Activated CD4-positive, alpha-beta memory T cell treated with anti-CD3 and anti-CD28 coated beads for 36 hours (primary cell): ENCODE measurements at regions of chr1 and their contacts with region 1.

Region 1: DNA sequence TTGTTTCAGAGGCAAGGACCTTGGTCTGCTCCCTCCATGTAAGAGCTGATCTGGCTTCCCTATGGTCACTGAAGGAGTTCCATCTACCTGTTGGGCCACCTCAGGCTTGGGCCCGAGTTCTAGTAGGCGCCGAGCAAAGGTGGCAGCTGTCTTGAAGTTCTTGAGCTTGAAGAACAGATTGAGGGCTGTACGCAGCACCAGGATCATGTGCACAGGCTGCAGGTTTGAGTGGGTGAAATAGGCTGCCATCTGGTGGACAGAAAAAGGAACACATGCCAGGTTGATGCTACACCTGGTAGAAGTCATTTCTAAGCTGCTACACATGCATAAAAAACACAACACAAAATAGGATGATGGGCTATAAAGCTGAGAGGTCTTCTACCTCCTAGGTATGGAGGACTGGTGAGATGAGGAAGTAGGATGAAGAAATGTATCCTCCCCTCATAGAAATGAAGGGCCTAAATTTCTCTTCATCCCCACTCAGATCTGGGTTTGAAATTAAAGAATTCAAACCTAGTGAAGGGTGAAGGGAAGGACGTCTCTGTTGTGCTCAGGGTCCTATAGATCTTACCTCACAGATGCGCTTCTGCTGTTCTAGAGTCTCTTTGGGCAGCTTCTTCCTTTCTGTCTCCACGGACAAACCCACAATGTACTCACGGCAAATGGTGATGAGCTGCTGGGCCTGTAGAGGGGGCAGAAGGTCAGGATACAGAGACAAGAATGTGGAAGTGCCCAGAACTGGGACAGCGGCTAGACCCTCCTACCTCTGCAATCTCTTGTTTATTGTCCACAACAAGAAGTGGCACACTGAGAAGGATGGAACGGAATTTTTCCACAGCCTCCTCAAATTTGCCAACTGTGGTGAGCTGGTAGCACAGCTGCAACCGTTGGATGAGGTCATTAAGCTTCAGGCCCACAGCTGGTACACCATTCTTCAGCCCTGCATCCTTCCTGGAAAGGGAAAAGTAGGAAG is 6.6 kb upstream of the PEX19 start:
- DNase-seq: peak; percentile 76
- H3K4me3 Mint-ChIP-seq: no peak overlapping the region
- H3K27ac Mint-ChIP-seq: peak overlapping the region; percentile 47
- H3K4me1 Mint-ChIP-seq: peaks cover 3% of the 10 kb centered on the region
- H3K27me3 Mint-ChIP-seq: no peaks in the 10 kb centered on the region

Region 2: DNA sequence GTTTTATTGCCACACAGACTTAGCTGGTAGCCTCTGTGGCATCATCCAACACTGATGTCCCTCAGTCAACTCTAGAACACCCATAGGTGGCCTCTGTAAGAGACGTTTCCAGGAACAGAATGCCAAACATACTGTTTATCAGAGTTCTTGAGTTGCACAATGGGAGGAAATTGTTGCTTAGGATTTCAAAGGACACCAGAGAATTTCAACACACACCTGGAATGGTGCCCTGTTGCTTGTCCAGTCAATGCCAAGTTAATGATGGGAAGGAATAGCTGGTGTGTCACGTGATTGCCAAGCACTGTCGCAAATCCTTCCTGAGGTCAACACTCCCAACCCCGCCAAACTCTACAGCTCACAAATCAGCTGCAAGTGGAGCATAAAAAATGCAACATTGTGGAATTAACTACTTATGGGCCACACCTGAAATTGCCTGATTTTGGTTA is 539.4 kb before region 1 on chr1:
- CTCF ChIA-PET with region 1: no interaction called
- POLR2A ChIA-PET with region 1: no interaction called
- intact Hi-C with region 1: no loop called
- DNase-seq: no peak
- H3K4me3 Mint-ChIP-seq: no peak overlapping the region
- H3K27ac Mint-ChIP-seq: no peak overlapping the region
- H3K4me1 Mint-ChIP-seq: no peaks in the 10 kb centered on the region
- H3K27me3 Mint-ChIP-seq: peaks cover 8% of the 10 kb centered on the region

Region 3: GRCh38 chr1:160085686-160086455 is 205.7 kb before region 1 on chr1:
- CTCF ChIA-PET with region 1: interaction called, 10 read pairs
- POLR2A ChIA-PET with region 1: no interaction called
- intact Hi-C with region 1: no loop called
- DNase-seq: peak; percentile 87
- H3K4me3 Mint-ChIP-seq: no peak overlapping the region
- H3K27ac Mint-ChIP-seq: no peak overlapping the region
- H3K4me1 Mint-ChIP-seq: peaks cover 13% of the 10 kb centered on the region
- H3K27me3 Mint-ChIP-seq: peaks cover 21% of the 10 kb centered on the region

Region 4: GRCh38 chr1:160161965-160162705 is 129.4 kb before region 1 on chr1:
- CTCF ChIA-PET with region 1: interaction called, 12 read pairs
- POLR2A ChIA-PET with region 1: no interaction called
- intact Hi-C with region 1: no loop called
- DNase-seq: no peak
- H3K4me3 Mint-ChIP-seq: no peak overlapping the region
- H3K27ac Mint-ChIP-seq: no peak overlapping the region
- H3K4me1 Mint-ChIP-seq: peaks cover 6% of the 10 kb centered on the region
- H3K27me3 Mint-ChIP-seq: peaks cover 5% of the 10 kb centered on the region

Region 5: DNA sequence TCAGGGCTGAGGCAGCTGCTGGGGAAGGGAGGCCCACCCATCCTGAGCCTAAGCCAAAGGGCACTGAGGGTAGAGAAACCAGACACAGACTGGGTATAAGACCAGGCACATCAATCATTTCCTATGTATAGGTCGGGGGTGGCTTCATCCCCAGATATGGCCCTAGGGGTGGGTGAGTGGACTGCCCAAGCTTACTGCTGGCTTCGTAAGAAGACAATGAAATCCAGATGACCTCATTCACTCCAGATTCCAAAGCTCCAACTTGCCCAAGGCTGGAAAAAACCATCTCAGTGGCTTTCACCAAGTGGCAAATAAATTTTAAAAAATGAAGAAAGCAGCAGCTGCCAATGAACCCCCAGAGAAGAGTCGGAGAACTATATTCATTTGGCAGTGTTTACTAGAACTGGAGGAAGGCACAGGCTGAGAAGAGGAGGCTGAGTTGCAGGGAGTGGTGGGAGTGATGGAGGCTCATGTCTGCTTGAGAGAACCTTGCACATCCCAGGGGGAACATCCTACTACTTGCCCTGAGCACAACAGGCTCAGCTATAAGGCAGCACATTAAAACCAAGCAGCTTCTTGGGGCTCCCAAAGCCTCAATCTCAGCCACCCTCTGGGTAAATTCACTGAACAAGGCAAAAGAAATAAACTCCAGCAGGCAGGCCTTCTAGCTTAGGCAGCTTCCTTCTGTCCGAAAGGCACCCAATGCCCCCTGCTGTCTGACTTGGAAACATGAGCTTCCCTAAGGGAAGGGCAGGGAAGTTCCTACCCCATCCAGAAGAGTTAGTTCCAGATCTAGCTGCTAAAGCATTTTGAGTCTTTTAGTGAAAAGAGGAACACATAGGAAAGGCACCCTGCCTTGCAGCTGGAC is 72.2 kb before region 1 on chr1:
- CTCF ChIA-PET with region 1: interaction called, 16 read pairs
- POLR2A ChIA-PET with region 1: interaction called, 5 read pairs
- intact Hi-C with region 1: no loop called
- DNase-seq: no peak
- H3K4me3 Mint-ChIP-seq: no peak overlapping the region
- H3K27ac Mint-ChIP-seq: no peak overlapping the region
- H3K4me1 Mint-ChIP-seq: no peaks in the 10 kb centered on the region
- H3K27me3 Mint-ChIP-seq: no peaks in the 10 kb centered on the region

Region 6: DNA sequence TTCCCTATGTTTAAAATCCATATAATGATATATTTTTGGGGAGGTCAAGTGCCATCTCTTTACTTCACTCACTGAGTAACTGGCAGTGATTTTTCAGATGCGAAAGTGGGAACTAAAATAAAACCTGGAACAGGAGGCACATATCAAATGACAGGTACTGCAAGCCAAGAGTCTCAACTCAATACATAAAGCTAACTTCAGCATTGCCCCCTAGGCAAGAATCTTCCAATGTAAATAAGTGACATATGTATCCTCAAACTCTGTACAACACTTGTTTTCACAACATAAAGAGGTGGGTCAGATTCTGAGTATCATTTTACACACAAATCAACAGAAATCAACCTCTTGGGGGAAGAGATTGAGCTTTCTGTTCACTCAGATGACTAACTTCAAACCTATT is 47.3 kb before region 1 on chr1:
- CTCF ChIA-PET with region 1: interaction called, 46 read pairs
- POLR2A ChIA-PET with region 1: no interaction called
- intact Hi-C with region 1: no loop called
- DNase-seq: no peak
- H3K4me3 Mint-ChIP-seq: no peak overlapping the region
- H3K27ac Mint-ChIP-seq: no peak overlapping the region
- H3K4me1 Mint-ChIP-seq: peaks cover 7% of the 10 kb centered on the region
- H3K27me3 Mint-ChIP-seq: no peaks in the 10 kb centered on the region

Region 7: GRCh38 chr1:160277330-160277729 is 14.2 kb before region 1 on chr1:
- CTCF ChIA-PET with region 1: interaction called, 44 read pairs
- POLR2A ChIA-PET with region 1: no interaction called
- intact Hi-C with region 1: no loop called
- DNase-seq: no peak
- H3K4me3 Mint-ChIP-seq: no peak overlapping the region
- H3K27ac Mint-ChIP-seq: no peak overlapping the region
- H3K4me1 Mint-ChIP-seq: no peaks in the 10 kb centered on the region
- H3K27me3 Mint-ChIP-seq: no peaks in the 10 kb centered on the region

Region 8: DNA sequence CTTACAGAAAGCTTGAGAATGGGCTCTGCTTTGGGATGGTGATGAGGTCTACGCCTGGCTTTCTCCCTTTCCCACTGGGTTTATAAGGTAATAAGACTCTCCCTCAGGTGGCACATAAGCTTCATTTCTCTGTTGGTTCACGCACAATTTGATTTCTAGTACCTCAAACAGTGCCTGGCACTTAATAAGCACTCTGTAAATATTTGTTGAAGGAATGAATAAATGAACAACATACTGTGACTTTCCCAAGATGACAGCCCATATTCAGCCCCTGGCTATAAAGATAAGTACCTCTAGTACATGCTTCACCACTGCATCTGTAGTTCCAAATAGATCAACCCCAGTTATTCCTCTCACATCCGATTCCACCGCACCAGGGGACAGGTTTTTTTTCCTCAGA is 33.7 kb after region 1 on chr1:
- CTCF ChIA-PET with region 1: interaction called, 17 read pairs
- POLR2A ChIA-PET with region 1: no interaction called
- intact Hi-C with region 1: no loop called
- DNase-seq: no peak
- H3K4me3 Mint-ChIP-seq: no peak overlapping the region
- H3K27ac Mint-ChIP-seq: no peak overlapping the region
- H3K4me1 Mint-ChIP-seq: peaks cover 10% of the 10 kb centered on the region
- H3K27me3 Mint-ChIP-seq: no peaks in the 10 kb centered on the region

Region 9: DNA sequence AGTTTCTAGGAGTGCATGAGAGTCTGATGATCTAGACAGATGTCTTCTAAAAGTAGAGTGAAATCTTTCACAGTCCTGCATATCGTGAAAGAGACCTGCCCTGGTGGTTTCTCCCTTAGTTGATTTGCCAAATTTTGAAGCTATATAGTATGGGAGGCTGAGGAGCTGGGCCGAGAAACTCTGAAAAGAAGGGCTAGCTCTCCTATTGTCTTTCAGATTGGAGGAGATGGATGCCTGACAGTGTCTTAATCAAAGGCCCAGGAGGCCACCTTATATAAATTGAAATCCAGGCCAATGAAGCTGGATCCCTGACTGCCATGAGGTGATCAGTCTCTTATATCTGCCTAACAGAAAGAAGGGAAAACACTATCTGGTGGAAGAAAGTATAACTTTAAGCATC is 306.2 kb after region 1 on chr1:
- CTCF ChIA-PET with region 1: no interaction called
- POLR2A ChIA-PET with region 1: no interaction called
- intact Hi-C with region 1: no loop called
- DNase-seq: no peak
- H3K4me3 Mint-ChIP-seq: no peak overlapping the region
- H3K27ac Mint-ChIP-seq: no peak overlapping the region
- H3K4me1 Mint-ChIP-seq: peaks cover 2% of the 10 kb centered on the region
- H3K27me3 Mint-ChIP-seq: no peaks in the 10 kb centered on the region